Left cardiac atrium (tissue), 4 donors: ENCODE measurements at regions of chr13 and their contacts with region 1.

Region 1: DNA sequence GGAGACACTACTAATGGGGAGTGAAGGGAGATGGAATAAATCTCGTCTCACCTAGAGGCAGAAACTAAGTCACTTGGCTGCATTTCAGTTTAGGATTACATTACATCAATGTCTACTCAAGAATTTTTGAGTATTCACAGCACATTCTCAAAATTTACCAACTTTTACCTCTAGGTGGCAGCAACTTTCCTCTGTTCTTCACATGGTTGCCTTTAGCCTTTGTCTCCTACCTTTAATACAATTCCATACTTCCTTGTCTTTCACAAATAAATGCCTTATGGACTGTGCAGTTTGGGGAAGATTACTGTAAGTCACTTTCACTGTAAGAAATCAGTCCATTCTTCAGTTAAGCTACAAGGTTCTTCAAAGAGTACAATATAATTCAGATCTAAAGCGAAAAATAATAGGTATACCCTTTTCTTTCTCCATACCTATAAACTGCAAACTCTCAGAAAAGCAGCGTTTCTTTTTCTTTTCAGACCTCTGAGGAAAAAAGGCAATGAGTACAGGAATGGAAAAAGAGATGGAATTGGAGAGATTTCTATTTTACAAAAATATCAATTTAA is 379.4 kb downstream of the KLF12 start:
- DNase-seq: no peak
- ATAC-seq: peak; percentile 44 to 61

Region 2: GRCh38 chr13:75219479-75220237 is 1464.8 kb after region 1 on chr13:
- intact Hi-C with region 1: loop called in 1 of 2 experiments (anchors 10 kb)
- DNase-seq: peak; percentile 83
- ATAC-seq: peak; percentile 93 to 97

Region 3: DNA sequence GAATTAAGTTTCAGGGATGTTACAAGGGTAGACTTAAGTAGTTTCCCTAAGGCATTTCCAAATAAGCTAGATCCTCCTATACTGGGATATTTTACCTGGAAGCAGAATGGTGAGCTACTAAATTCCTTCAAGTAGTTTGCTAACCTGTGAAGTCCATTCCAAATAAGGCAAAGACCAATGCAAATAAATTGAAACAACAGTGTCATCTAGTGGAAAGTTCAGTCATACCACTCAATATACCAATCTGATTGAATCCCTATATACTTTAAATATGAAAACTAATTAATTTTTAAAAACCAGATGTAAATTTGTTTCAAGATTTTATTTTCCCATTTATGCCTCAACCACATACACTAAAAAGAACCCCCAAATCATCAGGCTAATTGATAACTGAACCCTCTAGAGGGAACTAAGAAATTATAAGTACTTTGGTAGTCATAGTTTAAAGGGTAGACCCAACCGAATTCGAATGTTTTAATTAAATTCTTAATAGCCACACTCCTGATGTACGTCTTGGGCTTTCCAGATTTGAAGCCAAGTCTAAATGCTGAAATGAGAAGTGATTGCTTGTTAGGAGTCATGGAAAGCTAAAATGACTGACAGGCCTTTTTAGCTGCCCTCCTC is 1503.5 kb after region 1 on chr13:
- intact Hi-C with region 1: loop called in 1 of 2 experiments (anchors 10 kb)
- DNase-seq: no peak
- ATAC-seq: peak in 1 of 2 donors; percentile 53